Activated T-helper 2 cell treated with anti-CD3 and anti-CD28 coated beads, Interferon-gamma antibody, Interleukin-2, Interleukin-4, amounts not matched to agents 10 μg/mL and 5 μg/mL and 100 μg/mL, durations not matched to agents 14 hours and 24 hours and 36 hours (primary cell): ENCODE measurements at regions of chrX and their contacts with region 1.

Region 1: GRCh38 chrX:40647307-40648197 is at the start of gene CXorf38:
- DNase-seq: peak; percentile 85
- H3K4me3 Mint-ChIP-seq: peak within 1 kb of the TSS; percentile 87
- H3K27ac Mint-ChIP-seq: peak within 1 kb of the TSS; percentile 87
- H3K4me1 Mint-ChIP-seq: peaks cover 17% of the 10 kb centered on the region
- H3K27me3 Mint-ChIP-seq: no peaks in the 10 kb centered on the region
- total RNA-seq, gene CXorf38: 19.5 TPM in 2 replicates

Region 2: GRCh38 chrX:40496728-40497127 is 150.8 kb before region 1 on chrX:
- intact Hi-C with region 1: no loop called
- DNase-seq: no peak
- H3K4me3 Mint-ChIP-seq: no peak overlapping the region
- H3K27ac Mint-ChIP-seq: no peak overlapping the region
- H3K4me1 Mint-ChIP-seq: no peaks in the 10 kb centered on the region
- H3K27me3 Mint-ChIP-seq: no peaks in the 10 kb centered on the region

Region 3: DNA sequence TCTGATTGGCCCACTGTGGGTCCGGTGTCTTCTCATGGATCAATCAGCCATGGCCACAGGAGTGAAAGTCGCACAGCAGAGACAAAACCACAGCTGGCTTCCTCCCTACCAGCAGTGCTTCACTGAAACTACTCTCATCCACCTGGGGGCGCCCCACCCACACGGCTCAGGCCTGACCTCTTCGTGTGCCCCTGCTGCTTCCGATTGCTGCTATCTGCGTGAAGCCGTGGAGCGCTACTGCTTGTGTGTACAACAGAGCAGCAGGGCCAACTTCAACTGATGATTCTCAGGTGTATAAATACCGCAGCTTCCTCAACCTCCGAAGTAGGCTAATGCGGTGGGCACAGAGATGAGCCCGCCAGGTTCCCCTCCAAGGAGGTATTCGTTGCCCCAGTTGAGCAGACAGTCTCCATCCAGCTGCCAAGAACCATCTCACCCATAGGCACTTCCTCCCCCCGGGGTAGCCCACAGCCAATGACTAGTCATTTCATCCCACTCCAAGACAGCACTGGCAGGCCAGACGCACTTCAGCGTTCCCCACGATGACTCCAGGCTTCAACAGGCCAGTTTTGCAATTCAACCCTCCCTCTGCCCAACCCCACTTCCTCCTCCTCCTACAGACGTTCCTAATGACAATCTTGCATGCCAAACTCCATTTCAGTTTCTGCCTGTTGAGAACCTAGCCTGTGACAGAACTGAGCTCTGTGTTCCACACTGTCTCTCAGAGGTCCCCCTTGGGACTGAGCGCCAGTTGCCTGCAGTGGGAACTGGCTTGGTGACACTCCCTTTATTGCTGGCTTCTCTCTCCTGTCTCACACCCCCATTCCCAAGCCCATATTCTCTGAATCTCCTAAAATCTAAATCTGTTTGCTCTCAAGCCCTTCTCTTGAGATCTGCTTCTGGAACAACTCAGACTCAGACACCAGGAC is 108.1 kb before region 1 on chrX:
- intact Hi-C with region 1: loop called (anchors 2 kb)
- DNase-seq: peak; percentile 60
- H3K4me3 Mint-ChIP-seq: no peak overlapping the region
- H3K27ac Mint-ChIP-seq: peak overlapping the region; percentile 55
- H3K4me1 Mint-ChIP-seq: peaks cover 20% of the 10 kb centered on the region
- H3K27me3 Mint-ChIP-seq: peaks cover 15% of the 10 kb centered on the region

Region 4: GRCh38 chrX:40580537-40581335 is 66.8 kb before region 1 on chrX and contains the start of gene ATP6AP2:
- intact Hi-C with region 1: loop called (anchors 2 kb)
- DNase-seq: peak; percentile 87
- H3K4me3 Mint-ChIP-seq: peak within 1 kb of the TSS; percentile 90
- H3K27ac Mint-ChIP-seq: peak within 1 kb of the TSS; percentile 90
- H3K4me1 Mint-ChIP-seq: peaks cover 18% of the 10 kb centered on the region
- H3K27me3 Mint-ChIP-seq: no peaks in the 10 kb centered on the region
- total RNA-seq, gene ATP6AP2: 69.6 and 70.3 TPM in 2 replicates

Region 5: GRCh38 chrX:40735325-40736169 is 88.0 kb after region 1 on chrX and contains the start of gene MED14:
- intact Hi-C with region 1: loop called (anchors 2 kb)
- DNase-seq: peak; percentile 83
- H3K4me3 Mint-ChIP-seq: peak within 1 kb of the TSS; percentile 82
- H3K27ac Mint-ChIP-seq: peak within 1 kb of the TSS; percentile 91
- H3K4me1 Mint-ChIP-seq: peaks cover 29% of the 10 kb centered on the region
- H3K27me3 Mint-ChIP-seq: no peaks in the 10 kb centered on the region
- total RNA-seq, gene MED14: 37.8 and 44.7 TPM in 2 replicates

Region 6: DNA sequence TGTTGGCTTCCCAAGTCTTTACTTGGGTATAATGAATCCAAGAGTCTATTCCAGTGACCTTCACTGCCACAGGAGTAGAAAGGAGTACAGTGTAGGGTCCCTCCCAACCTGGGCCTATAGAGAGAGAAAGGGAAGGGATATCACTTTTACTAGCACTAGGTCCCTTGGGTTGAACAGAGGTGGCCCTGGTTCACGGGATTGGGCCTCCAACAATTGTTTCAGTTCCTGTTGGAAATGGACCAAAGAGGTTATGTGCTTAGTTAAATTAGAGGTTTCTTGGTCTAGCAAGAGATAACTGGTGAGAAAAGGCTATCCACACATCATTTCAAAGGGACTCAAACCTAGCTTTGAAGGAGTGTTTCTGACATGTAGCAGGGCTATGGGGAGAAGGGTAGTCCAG is 144.9 kb after region 1 on chrX:
- intact Hi-C with region 1: loop called (anchors 1 kb)
- DNase-seq: no peak
- H3K4me3 Mint-ChIP-seq: no peak overlapping the region
- H3K27ac Mint-ChIP-seq: no peak overlapping the region
- H3K4me1 Mint-ChIP-seq: peaks cover 2% of the 10 kb centered on the region
- H3K27me3 Mint-ChIP-seq: peaks cover 6% of the 10 kb centered on the region

Region 7: DNA sequence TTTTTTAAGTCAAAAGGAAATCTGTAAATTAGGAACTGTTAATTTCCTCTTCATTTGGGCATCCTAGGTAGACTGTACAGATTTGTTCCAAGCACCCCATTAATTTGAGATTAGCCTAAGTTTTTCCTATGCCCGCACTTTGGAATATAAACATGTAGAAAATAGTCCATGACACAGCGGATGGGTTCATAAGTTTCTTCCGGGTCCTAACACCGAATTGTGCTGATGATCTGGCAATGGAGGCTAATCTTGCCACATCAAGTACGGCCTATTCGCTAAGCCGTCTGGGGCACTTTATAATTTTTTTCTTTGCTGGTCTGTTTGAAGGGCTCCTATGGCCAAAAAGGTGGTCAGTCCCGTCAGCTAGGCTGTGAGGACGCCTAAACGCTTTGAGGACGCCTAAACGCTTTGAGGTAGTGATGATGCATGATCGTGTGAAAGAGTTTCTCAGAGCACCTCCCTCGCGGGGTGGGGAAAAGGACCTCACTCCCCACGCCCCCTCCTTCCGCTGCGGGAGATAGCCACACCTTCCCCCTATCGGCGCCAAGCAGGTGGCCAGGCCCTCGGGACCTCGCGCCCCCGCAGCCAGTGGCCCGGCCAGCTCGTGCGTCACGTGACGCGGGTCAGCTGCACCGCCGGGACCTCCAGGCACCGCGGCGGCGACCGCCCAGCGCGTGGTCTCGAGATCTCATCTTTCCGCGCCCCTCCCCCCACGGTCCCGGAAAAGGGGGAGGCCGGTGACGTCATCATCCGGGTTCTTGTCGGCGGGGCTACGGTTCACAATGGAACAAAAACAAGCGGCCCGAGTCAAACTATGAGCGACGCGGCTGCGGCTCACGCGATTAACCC is 436.7 kb after region 1 on chrX:
- intact Hi-C with region 1: loop called (anchors 5 kb)
- DNase-seq: peak; percentile 88
- H3K4me3 Mint-ChIP-seq: peak overlapping the region; percentile 89
- H3K27ac Mint-ChIP-seq: peak overlapping the region; percentile 99
- H3K4me1 Mint-ChIP-seq: peaks cover 18% of the 10 kb centered on the region
- H3K27me3 Mint-ChIP-seq: no peaks in the 10 kb centered on the region